ENCODE measurements at regions of chr16 and their contacts with region 1.

Region 1: DNA sequence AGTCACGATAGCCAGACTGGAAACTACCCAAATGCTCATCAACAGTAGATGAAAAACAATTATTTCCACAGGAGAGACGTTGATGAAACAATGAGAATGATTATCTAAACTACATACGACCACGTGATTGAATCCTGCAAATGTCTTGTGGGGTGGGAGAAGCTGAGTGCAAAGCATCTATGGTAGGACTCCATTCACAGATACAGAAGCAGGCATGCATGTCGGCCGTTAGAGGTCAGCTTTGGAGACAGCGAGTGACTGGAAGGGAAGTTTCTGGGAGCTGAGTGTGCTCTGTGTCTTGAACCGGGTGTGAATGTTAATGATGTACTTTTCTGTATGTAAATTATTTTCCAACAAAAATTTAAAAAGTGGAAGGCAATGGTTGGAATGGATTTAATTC is 71.5 kb upstream of the DNAJA2 start:
- DNase-seq: no peak
- ATAC-seq: no peak
- H3K4me3 ChIP-seq: no peak overlapping the region
- H3K27ac ChIP-seq: no peak overlapping the region
- H3K4me1 ChIP-seq: peaks cover 22% of the 10 kb centered on the region
- H3K27me3 ChIP-seq: no peaks in the 10 kb centered on the region
- CTCF ChIP-seq: no peak
- EP300 ChIP-seq: no peak
- POLR2A ChIP-seq: no peak
- RAD21 ChIP-seq: no peak

Region 2: DNA sequence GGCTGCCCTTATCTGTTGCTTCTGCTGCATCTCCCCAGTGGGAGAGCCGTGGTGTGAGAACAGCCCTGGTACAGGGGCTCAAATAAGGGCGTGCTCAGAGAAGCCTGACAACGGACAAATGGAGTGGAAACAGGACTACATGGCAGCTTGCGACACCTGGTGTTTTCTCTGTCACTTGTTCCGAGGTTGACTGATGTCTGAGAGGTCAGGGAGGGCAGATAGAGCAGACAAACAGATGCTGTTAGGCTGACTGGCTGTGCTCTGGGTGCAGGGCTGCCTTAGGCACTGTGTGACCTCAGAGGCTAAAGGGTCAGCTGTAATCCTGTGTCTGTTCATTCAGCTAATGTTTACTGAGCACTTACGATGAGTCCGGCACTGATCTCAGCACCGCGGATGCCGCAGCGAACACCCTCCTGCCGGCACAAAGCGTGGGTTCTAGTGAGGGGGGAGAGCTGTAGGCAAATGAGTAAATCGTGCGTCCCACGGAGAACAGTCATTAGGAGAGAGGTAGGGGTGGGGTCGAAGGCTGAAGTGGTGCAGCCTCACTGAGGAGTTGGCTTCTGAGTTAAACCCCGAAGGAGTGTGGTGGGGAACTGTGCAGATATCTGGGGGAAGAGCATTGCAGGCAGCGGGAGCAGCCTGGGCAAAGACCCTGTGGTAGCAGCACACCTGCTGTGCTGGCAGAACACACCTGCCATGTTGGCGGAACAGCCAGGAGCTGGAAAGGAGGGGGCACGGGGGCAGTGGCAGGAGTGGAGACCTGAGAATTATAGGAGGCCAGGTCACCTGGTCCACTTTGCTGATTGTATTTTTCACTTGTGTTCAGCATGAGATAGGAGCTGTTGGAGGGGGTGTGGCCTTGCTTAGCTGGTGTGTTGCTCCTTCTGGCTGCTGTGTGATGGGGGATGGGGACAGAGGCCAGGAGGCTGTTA is 125.9 kb before region 1 on chr16:
- CTCF ChIA-PET with region 1: no interaction called
- POLR2A ChIA-PET with region 1: no interaction called
- RAD21 ChIA-PET with region 1: no interaction called
- SMC1A ChIA-PET with region 1: no interaction called
- in situ Hi-C with region 1: no loop called
- intact Hi-C with region 1: no loop called
- DNase-seq: peak; percentile 54
- ATAC-seq: peak; percentile 84
- H3K4me3 ChIP-seq: peak overlapping the region; percentile 37; the same call in 1 of the 2 replicates
- H3K27ac ChIP-seq: 0 out of 2 replicates have a peak overlapping the region, but pooled peaks have one; percentile 39
- H3K4me1 ChIP-seq: peaks cover 19% of the 10 kb centered on the region
- H3K27me3 ChIP-seq: no peaks in the 10 kb centered on the region
- CTCF ChIP-seq: peak; percentile 37 to 67 (median 51); a peak in 5 of 6 replicates
- EP300 ChIP-seq: no peak
- POLR2A ChIP-seq: peak; percentile 51
- RAD21 ChIP-seq: peak; percentile 69

Region 3: DNA sequence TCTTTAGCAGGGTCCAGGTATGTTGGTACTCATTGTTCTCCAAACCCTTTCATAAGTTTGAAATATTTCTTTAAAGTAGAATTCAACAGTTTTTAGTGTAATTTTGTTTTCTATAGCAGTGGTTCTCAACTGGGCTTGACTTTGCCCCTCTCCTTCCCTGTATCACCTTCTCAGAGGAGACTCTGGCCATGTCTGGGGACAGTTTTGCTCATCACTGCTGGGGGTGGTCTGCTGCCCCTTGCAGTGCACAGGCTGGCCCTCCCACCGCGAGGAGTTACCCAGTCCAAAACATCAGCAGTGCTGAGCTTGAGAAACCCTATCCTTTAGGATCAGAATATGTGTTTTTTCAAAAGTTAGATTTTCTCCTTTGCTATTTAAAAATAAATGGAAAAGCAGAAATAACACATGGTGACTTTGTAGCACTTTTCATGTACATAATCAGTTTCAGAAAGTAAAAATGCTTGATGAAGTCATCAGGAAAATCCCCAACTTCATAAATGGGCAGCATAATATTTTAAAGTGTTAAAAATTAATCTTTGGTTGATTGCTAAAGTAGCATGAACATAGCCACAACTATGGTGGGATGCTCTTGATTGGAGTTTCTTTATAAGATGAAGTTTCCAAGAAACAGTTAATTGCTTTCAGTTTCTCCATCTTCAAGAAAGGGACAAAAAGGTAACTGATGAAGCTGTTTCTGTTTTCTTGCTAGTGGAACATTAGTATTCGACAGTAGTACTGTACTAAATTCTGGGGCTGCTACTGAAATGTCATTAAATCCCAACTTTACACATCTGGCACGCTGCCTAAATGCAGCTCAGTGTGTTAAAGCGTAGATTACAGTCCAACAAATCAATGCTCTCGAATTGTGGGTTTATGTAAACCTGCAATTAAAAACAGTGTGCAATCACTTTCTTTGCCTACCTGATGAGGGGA is 28.5 kb after region 1 on chr16:
- CTCF ChIA-PET with region 1: interaction called, 7 read pairs
- POLR2A ChIA-PET with region 1: interaction called, 10 read pairs
- RAD21 ChIA-PET with region 1: interaction called, 24 read pairs
- SMC1A ChIA-PET with region 1: interaction called, 42 read pairs
- in situ Hi-C with region 1: no loop called
- intact Hi-C with region 1: loop called (anchors 2 kb)
- DNase-seq: peak; percentile 43
- ATAC-seq: peak; percentile 82
- H3K4me3 ChIP-seq: no peak overlapping the region
- H3K27ac ChIP-seq: peak overlapping the region; percentile 48
- H3K4me1 ChIP-seq: peaks cover 12% of the 10 kb centered on the region
- H3K27me3 ChIP-seq: no peaks in the 10 kb centered on the region
- CTCF ChIP-seq: no peak
- EP300 ChIP-seq: 0 out of 4 replicates have a peak, but pooled peaks of 1 of the 2 experiments have one; percentile 27
- POLR2A ChIP-seq: no peak
- RAD21 ChIP-seq: no peak

Measured in GM12878 (cell line).